Left ventricle myocardium inferior (tissue), 1 donor: ENCODE measurements at regions of chr17 and their contacts with region 1.

Region 1: GRCh38 chr17:37761059-37761458 is 16.2 kb upstream of the HNF1B start:
- DNase-seq: no peak
- H3K4me3 ChIP-seq: no peak overlapping the region
- H3K27ac ChIP-seq: no peak overlapping the region
- H3K4me1 ChIP-seq: no peaks in the 10 kb centered on the region
- H3K27me3 ChIP-seq: peaks cover 98% of the 10 kb centered on the region
- CTCF ChIP-seq: no peak

Region 2: GRCh38 chr17:37430051-37430627 is 330.9 kb before region 1 on chr17:
- intact Hi-C with region 1: no loop called
- DNase-seq: no peak
- H3K4me3 ChIP-seq: no peak overlapping the region
- H3K27ac ChIP-seq: no peak overlapping the region
- H3K4me1 ChIP-seq: peaks cover 3% of the 10 kb centered on the region
- H3K27me3 ChIP-seq: no peaks in the 10 kb centered on the region
- CTCF ChIP-seq: no peak

Region 3: GRCh38 chr17:37698132-37698615 is 62.9 kb before region 1 on chr17:
- intact Hi-C with region 1: loop called (anchors 5 kb)
- DNase-seq: no peak
- H3K4me3 ChIP-seq: no peak overlapping the region
- H3K27ac ChIP-seq: no peak overlapping the region
- H3K4me1 ChIP-seq: no peaks in the 10 kb centered on the region
- H3K27me3 ChIP-seq: peaks cover 21% of the 10 kb centered on the region
- CTCF ChIP-seq: no peak

Region 4: GRCh38 chr17:37848690-37849616 is 87.9 kb after region 1 on chr17:
- intact Hi-C with region 1: no loop called
- DNase-seq: no peak
- H3K4me3 ChIP-seq: no peak overlapping the region
- H3K27ac ChIP-seq: no peak overlapping the region
- H3K4me1 ChIP-seq: peaks cover 5% of the 10 kb centered on the region
- H3K27me3 ChIP-seq: peaks cover 46% of the 10 kb centered on the region
- CTCF ChIP-seq: no peak